Colonic mucosa (tissue), 4 donors: ENCODE measurements at regions of chr5 and their contacts with region 1.

Region 1: DNA sequence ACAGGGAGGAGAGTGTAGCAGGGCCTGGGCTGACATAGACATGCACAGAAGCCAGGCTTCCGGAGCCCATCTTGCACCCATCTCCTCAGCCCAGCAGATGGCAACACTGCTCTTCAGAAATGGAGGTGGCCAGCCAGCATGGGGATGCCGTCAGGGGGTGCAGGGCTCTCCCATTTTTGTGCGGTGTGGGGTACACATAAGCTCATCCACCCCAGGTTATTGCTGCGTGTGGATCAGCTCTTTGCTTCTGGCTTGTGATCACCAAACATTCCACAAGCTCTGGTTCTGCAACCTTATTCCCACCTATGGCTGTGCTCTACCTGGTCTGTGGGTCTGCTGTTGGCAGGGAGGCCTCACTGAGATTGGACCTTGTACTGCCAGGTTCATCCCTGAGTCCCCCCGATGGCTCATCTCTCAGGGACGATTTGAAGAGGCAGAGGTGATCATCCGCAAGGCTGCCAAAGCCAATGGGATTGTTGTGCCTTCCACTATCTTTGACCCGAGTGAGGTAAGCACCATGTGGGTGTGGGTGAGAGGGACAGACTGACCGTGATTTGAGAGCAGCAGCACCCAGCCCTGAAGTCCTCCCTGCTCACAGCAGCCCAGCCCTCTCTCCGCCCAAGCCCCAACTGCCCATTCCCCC is 17.3 kb downstream of the SLC22A5 start:
- DNase-seq: peak; percentile 82
- H3K4me3 ChIP-seq: no peak overlapping the region
- H3K27ac ChIP-seq: peak overlapping the region; percentile 60
- H3K4me1 ChIP-seq: peaks cover 9% of the 10 kb centered on the region
- H3K27me3 ChIP-seq: no peaks in the 10 kb centered on the region
- CTCF ChIP-seq: peak; percentile 80

Region 2: DNA sequence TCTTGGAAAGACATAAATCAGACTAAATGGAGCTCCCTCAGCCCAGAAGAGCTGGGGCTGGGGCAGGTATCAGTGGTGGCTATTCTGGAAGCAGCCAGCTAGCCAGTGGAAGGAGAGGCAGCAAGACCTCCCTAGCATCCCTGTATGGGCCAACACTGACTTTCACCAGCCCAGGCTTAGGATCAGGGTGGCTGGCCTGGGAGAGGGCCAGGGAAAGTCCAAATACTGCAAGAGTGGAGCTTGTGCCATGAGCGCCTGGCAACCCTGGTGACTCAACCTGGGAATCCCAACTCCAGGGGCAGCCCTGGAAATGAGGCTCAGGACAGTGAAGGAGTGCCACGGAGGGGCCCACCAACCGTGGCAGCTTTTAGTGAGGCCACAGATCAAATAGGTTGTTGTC is 111.4 kb after region 1 on chr5:
- intact Hi-C with region 1: loop called (anchors 2 kb)
- DNase-seq: peak; percentile 26
- H3K4me3 ChIP-seq: no peak overlapping the region
- H3K27ac ChIP-seq: peak overlapping the region; percentile 91
- H3K4me1 ChIP-seq: peaks cover 31% of the 10 kb centered on the region
- H3K27me3 ChIP-seq: no peaks in the 10 kb centered on the region
- CTCF ChIP-seq: no peak

Region 3: DNA sequence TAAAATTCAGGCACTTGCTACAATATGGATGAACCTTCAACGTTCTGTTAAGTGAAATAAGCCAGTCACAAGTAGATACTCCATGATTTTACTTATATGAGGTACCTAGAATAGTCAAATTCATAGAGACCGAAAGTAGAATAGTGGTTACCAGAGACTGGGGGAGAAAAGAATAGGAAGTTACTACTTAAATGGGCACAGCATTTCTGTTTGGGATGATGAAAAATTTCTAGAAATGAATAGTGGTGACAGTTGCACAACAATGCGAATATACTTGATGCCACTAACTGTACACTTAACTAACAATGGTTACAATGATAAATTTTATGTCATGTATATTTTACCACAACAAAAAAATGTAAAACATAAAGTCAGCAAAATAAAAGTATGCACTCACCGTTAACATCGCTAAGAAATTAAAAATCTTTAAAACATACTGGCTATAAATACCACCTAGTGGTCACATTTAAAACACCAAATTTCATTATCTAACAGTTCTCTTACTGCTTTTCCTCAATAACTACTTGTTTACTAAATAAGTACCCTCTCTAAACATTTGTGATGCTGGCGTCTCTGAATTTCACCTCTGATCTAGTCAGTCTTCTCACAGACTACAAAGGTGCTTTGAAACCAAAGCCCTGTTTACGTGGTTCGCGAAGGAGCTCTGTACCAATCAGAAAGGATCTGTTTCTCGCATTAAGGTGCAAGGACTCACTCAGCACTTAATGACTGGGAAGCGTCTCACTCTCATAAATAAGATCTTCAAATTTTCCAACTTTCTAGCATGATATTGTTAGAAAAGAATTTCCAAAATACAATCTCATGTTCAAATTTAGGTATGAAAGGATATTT is 327.9 kb after region 1 on chr5:
- intact Hi-C with region 1: loop called (anchors 10 kb)
- DNase-seq: no peak
- H3K4me3 ChIP-seq: no peak overlapping the region
- H3K27ac ChIP-seq: no peak overlapping the region
- H3K4me1 ChIP-seq: no peaks in the 10 kb centered on the region
- H3K27me3 ChIP-seq: no peaks in the 10 kb centered on the region
- CTCF ChIP-seq: peak; percentile 40

Region 4: DNA sequence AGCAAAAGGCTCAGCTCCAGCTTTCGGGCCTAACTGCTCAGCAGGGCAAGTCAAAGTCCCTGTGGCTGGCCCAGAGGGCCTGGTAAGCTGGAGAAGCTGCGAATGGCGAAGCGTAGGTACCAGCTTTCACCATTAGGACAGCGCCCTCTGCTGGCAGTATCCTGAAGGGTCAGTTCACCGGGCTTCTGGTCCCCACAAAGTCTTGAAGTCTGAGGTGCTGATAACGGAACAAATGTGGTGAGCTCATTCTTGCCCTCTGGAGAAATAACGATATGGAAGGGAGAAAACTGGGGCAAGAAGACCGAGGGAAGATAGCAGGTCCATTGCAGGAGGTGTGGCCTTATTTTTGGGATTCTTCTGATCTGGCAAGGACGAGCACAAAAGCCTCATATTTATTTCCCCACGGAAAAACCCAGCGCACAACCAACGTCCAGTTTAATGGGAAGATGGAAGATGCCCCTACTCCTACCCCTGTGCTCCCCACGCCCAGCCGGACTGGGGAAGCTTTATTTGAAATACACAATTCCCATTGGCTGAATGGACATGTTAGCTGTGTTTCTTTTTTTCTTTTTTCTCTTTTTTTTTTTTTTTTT is 433.5 kb after region 1 on chr5:
- intact Hi-C with region 1: loop called (anchors 10 kb)
- DNase-seq: peak; percentile 97
- H3K4me3 ChIP-seq: no peak overlapping the region
- H3K27ac ChIP-seq: no peak overlapping the region
- H3K4me1 ChIP-seq: no peaks in the 10 kb centered on the region
- H3K27me3 ChIP-seq: no peaks in the 10 kb centered on the region
- CTCF ChIP-seq: peak; percentile 89